T-cell (primary cell): ENCODE measurements at regions of chr5 and their contacts with region 1.

Region 1: DNA sequence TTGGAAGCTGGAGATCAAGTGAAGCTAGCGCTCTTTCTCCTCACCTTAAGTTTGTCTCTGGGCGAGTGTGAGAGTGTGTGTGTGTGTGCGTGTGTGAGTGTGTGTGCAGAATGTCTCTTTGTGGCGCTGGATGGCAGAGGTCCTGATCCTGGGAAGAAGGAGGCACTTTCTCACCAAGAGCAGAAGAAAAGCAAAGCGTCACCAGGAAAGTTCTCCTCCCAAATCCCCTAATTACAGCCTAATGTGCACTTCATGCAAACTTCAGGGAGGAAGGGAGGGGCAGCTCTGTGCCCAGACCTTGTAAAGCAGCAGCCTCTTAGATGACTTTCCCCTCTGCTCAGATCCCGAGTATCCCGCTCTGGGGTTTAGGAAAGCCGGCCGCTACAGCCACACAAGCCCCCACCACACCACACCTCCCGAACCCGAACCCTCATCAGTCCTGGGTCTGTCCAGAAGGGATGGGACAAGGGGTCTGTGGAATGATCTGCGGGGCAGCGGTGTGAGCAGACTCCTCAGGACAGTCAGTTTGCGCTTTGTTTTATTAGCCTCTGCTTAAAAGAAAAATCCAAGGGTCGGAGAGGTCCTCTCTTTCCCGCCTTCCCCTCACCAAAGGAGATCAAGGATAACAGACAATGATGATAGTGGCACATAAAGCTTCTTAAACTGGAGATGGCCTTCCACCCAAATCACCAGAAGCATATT is at the start of gene HAPLN1:
- DNase-seq: no peak
- ATAC-seq: no peak
- H3K4me3 ChIP-seq: peak within 1 kb of the TSS in 1 of 2 donors; percentile 52
- H3K4me3 Mint-ChIP-seq: peak within 1 kb of the TSS; percentile 46 to 76 (median 62)
- H3K27ac ChIP-seq: no peak within 1 kb of the TSS
- H3K27ac Mint-ChIP-seq: no peak within 1 kb of the TSS
- H3K4me1 ChIP-seq: no peaks in the 10 kb centered on the region
- H3K4me1 Mint-ChIP-seq: peaks cover 8 to 15% (median 9%) of the 10 kb centered on the region in 3 donors
- H3K27me3 ChIP-seq: peaks cover 8 to 21% of the 10 kb centered on the region in 2 experiments
- H3K27me3 Mint-ChIP-seq: peaks cover 47 to 48% of the 10 kb centered on the region in 2 donors
- total RNA-seq, gene HAPLN1: not detected

Region 2: DNA sequence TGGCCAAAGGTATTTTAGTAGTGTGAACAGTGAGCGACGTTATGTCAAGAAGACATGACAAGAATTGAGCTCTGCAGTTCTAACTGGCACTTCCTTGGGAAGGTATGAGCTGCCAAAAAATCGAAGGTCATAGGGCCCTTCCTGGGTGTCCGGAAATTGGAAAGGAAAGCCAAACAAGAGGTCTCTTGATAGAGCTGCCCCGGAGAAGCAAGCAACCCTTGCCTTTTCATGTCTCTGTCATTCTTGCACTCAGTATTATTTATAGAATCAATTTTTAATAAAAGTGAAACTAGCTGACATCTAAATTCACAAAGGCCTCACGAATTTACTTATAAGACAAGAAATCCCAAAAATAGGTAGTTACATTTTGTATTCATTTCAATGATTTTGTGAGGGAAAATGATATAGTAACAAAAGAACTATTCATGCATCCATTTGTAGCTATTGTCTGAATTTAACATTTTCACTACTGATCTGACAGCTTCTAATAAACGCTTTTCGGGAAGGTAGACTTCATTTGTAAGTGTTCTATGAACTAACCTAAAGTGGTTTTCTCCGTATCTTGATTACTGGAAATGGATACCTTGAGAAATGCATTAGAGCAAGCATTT is 363.3 kb before region 1 on chr5:
- CTCF ChIA-PET with region 1: interaction called in 1 of 2 experiments, 12 read pairs
- POLR2A ChIA-PET with region 1: no interaction called
- DNase-seq: no peak
- ATAC-seq: no peak
- H3K4me3 ChIP-seq: no peak overlapping the region
- H3K4me3 Mint-ChIP-seq: no peak overlapping the region
- H3K27ac ChIP-seq: no peak overlapping the region
- H3K27ac Mint-ChIP-seq: no peak overlapping the region
- H3K4me1 ChIP-seq: no peaks in the 10 kb centered on the region
- H3K4me1 Mint-ChIP-seq: no peaks in the 10 kb centered on the region
- H3K27me3 ChIP-seq: no peaks in the 10 kb centered on the region
- H3K27me3 Mint-ChIP-seq: no peaks in the 10 kb centered on the region

Region 3: GRCh38 chr5:83688281-83688680 is 32.7 kb before region 1 on chr5:
- CTCF ChIA-PET with region 1: no interaction called
- POLR2A ChIA-PET with region 1: no interaction called
- DNase-seq: no peak
- ATAC-seq: no peak
- H3K4me3 ChIP-seq: no peak overlapping the region
- H3K4me3 Mint-ChIP-seq: no peak overlapping the region
- H3K27ac ChIP-seq: no peak overlapping the region
- H3K27ac Mint-ChIP-seq: no peak overlapping the region
- H3K4me1 ChIP-seq: no peaks in the 10 kb centered on the region
- H3K4me1 Mint-ChIP-seq: no peaks in the 10 kb centered on the region
- H3K27me3 ChIP-seq: no peaks in the 10 kb centered on the region
- H3K27me3 Mint-ChIP-seq: peaks cover 7 to 15% of the 10 kb centered on the region in 2 donors